GM12878 (cell line): ENCODE measurements at regions of chr2 and their contacts with region 1.

Region 1: DNA sequence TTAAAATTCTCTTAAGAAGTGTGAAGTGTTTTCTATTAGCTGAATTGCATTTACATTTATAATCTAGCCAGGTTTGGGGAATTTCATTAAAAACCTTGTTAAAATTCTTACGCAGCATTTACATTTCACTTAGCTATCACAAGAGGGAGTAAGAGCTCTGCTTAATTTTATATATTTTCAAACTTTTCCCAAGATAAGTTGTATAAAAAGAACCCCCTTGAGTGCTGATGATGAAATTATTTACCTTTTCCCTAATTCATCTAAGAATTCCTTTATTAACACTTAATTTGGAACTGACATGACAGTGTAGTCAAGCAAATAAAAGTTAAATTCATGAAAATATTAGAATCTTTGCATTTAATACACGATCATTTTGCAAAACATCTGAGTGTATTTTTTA is 54.2 kb upstream of the ZSWIM2 start:
- DNase-seq: no peak
- ATAC-seq: no peak
- H3K4me3 ChIP-seq: no peak overlapping the region
- H3K27ac ChIP-seq: no peak overlapping the region
- H3K4me1 ChIP-seq: no peaks in the 10 kb centered on the region
- H3K27me3 ChIP-seq: no peaks in the 10 kb centered on the region
- CTCF ChIP-seq: peak in 2 of 3 experiments; percentile 8 to 34; a peak in 2 of 6 replicates
- EP300 ChIP-seq: no peak
- POLR2A ChIP-seq: no peak
- RAD21 ChIP-seq: peak; percentile 45

Region 2: DNA sequence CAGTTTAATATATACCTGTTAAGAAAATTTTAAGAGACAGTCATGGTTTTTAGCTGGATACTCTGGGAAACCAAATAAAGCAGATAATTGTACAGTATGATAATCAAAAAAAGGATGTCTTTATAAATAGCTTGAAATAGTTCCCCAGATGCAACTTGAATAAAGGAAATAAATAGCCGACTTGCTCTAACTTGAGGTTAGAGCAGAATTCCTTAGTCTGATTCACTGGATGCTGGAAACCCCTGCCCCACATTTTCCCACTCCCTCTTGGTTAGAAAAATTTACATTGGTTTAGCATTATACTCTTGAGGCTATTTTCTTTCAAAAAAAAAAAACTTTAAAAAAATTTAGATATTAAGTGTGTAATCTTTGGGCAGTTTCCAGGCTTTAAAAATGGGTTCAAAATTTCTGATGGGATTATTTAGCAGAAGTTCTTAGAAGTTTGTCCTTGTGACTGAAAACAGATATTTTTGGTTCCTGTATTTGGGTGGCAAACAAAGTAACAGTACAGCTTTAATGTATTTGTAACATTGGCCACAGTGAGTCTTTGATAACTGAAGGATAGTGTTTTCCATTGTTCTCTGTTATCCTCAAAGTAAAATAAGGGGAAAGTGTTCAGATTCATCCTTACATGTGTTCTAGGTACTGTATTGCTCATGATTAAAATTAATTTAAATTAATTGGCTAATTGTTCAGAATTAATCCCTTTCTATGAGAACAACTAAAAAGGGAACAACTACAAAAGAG is 273.8 kb before region 1 on chr2:
- CTCF ChIA-PET with region 1: no interaction called
- POLR2A ChIA-PET with region 1: no interaction called
- RAD21 ChIA-PET with region 1: no interaction called
- SMC1A ChIA-PET with region 1: no interaction called
- in situ Hi-C with region 1: no loop called
- intact Hi-C with region 1: no loop called
- DNase-seq: no peak
- ATAC-seq: no peak
- H3K4me3 ChIP-seq: no peak overlapping the region
- H3K27ac ChIP-seq: no peak overlapping the region
- H3K4me1 ChIP-seq: no peaks in the 10 kb centered on the region
- H3K27me3 ChIP-seq: no peaks in the 10 kb centered on the region
- CTCF ChIP-seq: no peak
- EP300 ChIP-seq: no peak
- POLR2A ChIP-seq: no peak
- RAD21 ChIP-seq: no peak

Region 3: DNA sequence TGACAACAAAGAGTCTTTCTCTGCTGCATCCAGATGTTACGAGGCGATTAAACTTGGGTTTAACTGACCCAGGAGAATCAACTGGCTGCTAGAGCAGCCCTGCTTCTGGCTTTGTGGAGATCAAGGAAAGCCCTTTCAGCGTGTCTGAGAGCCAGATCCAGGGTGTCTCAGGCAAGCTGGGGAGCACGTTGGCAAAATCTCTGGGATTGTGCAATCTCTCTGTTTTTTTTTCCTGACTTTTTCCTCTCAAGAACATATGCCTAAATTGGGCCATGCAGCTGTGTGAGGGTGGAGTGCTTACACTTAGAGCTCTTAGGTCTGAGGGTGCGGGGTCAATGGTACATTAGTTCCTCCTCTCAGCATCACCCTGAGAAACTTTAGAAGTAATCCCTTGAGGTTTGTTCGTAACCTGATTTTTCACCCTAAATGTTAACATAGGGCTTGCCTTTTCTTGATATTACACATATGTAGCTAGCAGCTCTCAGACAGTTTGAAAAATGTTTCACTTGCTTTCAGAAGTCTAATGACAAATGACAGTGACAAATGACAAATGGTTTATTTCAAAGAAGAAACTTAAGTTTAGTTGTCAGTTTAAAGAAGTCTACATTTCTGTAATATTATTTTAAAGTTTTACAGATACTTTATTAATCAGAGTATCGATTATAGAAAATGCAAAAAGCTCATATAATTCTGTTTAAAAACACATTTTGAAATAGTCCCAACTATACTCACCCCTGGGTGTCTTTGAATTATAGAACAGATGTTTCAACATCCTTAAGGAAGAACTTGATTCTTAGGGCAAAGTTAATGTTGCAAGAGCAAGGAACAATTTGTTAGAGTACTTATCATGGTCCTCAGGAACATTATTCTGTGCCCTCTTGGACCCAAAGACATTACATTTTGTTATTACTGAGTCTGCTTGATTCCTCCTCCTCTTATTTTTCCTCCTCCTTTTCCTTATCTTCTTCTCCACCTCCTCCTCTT is 15.8 kb before region 1 on chr2:
- CTCF ChIA-PET with region 1: interaction called, 15 read pairs
- POLR2A ChIA-PET with region 1: no interaction called
- RAD21 ChIA-PET with region 1: interaction called, 7 read pairs
- SMC1A ChIA-PET with region 1: interaction called, 14 read pairs
- in situ Hi-C with region 1: no loop called
- intact Hi-C with region 1: no loop called
- DNase-seq: peak; percentile 26
- ATAC-seq: peak; percentile 92
- H3K4me3 ChIP-seq: no peak overlapping the region
- H3K27ac ChIP-seq: no peak overlapping the region
- H3K4me1 ChIP-seq: no peaks in the 10 kb centered on the region
- H3K27me3 ChIP-seq: no peaks in the 10 kb centered on the region
- CTCF ChIP-seq: no peak
- EP300 ChIP-seq: peak; percentile 53 to 59; a peak in 2 of 4 replicates
- POLR2A ChIP-seq: no peak
- RAD21 ChIP-seq: no peak

Region 4: DNA sequence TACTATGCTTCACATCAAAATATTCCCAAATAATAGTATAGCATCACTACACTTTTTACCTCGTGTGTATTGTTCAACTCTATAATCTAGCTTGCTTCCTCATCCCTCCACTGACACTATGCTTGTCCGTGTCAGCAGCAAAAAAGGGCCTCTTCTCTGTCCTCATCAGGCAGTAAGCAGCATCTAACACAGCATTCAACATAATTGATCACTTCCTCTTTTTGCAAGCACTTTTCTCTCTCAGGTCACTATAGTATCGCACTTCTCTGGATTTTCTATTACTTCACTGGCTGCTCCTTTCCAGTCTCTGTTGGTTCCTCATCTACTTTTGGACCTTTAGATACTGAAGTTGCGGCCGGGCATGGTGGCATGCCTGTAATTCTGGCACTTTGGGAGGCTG is 10.7 kb after region 1 on chr2:
- CTCF ChIA-PET with region 1: interaction called, 12 read pairs
- POLR2A ChIA-PET with region 1: no interaction called
- RAD21 ChIA-PET with region 1: interaction called, 12 read pairs
- SMC1A ChIA-PET with region 1: interaction called, 17 read pairs
- in situ Hi-C with region 1: no loop called
- intact Hi-C with region 1: no loop called
- DNase-seq: peak; percentile 3
- ATAC-seq: peak; percentile 99
- H3K4me3 ChIP-seq: no peak overlapping the region
- H3K27ac ChIP-seq: no peak overlapping the region
- H3K4me1 ChIP-seq: peaks cover 3% of the 10 kb centered on the region; the same call in 1 of the 2 replicates
- H3K27me3 ChIP-seq: no peaks in the 10 kb centered on the region; a peak in 1 of 4 replicates
- CTCF ChIP-seq: no peak
- EP300 ChIP-seq: peak in 1 of 2 experiments; percentile 69; a peak in 1 of 4 replicates
- POLR2A ChIP-seq: no peak
- RAD21 ChIP-seq: no peak

Region 5: GRCh38 chr2:186919296-186919695 is 16.1 kb after region 1 on chr2:
- CTCF ChIA-PET with region 1: interaction called, 3 read pairs
- POLR2A ChIA-PET with region 1: no interaction called
- RAD21 ChIA-PET with region 1: interaction called, 12 read pairs
- SMC1A ChIA-PET with region 1: interaction called, 12 read pairs
- in situ Hi-C with region 1: no loop called
- intact Hi-C with region 1: no loop called
- DNase-seq: no peak
- ATAC-seq: no peak
- H3K4me3 ChIP-seq: no peak overlapping the region
- H3K27ac ChIP-seq: no peak overlapping the region
- H3K4me1 ChIP-seq: no peaks in the 10 kb centered on the region
- H3K27me3 ChIP-seq: no peaks in the 10 kb centered on the region
- CTCF ChIP-seq: no peak
- EP300 ChIP-seq: no peak
- POLR2A ChIP-seq: no peak
- RAD21 ChIP-seq: no peak